B cell (primary cell): ENCODE measurements at regions of chr10 and their contacts with region 1.

Region 1: DNA sequence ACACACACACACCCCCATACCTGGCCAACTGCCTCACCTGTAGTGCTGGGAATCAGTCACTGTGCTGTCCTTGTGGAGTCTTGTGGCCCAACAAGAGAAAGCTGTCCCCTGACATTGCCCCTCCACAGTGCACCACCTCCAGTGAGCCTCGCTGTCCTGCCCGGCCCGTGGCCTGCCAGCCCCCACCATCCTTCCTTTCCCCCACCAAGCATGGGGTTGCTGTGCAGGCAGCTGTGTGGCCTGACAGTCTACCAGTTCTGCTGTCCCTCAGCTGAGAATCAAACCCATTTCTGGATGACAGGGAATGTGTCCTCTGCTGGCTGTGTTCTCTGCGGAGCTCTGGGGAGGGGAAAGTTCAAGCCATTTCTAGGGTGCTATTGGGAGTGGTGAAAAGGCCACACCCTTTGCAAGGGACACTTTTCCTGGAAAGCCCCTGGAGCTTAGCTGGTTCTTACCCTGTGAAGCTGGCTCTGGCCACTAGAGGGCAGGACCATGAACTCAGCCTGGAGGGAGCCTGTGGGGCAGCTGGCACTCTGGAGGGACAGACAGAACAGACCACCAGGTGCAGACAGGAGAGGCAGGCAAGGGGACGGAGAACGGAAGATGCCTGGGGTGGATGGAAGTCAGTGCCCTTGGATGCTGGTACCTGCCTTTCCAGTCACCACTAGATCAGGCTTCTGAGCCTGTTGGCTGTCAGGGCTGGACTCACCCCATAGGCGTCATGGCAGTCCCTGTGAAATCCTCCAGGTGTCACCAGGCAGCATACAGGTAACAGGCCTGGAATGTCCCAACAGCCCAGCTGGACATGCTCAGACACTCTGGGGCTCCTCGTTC is 10.5 kb upstream of the MTPAP start:
- DNase-seq: peak; percentile 75
- ATAC-seq: peak; percentile 88
- H3K4me3 ChIP-seq: no peak overlapping the region
- H3K4me3 Mint-ChIP-seq: no peak overlapping the region
- H3K27ac ChIP-seq: no peak overlapping the region
- H3K27ac Mint-ChIP-seq: no peak overlapping the region
- H3K4me1 ChIP-seq: peaks cover 3 to 6% of the 10 kb centered on the region in 2 donors
- H3K4me1 Mint-ChIP-seq: peaks cover 3% of the 10 kb centered on the region
- H3K27me3 ChIP-seq: no peaks in the 10 kb centered on the region
- H3K27me3 Mint-ChIP-seq: peaks cover 14% of the 10 kb centered on the region
- CTCF ChIP-seq: peak; percentile 81

Region 2: GRCh38 chr10:30348378-30348776 is 11.2 kb before region 1 on chr10:
- CTCF ChIA-PET with region 1: interaction called, 25 read pairs
- POLR2A ChIA-PET with region 1: no interaction called
- intact Hi-C with region 1: no loop called
- DNase-seq: no peak
- ATAC-seq: no peak
- H3K4me3 ChIP-seq: peak overlapping the region; percentile 60 to 98 (median 97)
- H3K4me3 Mint-ChIP-seq: peak overlapping the region; percentile 99
- H3K27ac ChIP-seq: peak overlapping the region; percentile 86 to 88
- H3K27ac Mint-ChIP-seq: peak overlapping the region; percentile 95
- H3K4me1 ChIP-seq: peaks cover 20 to 21% of the 10 kb centered on the region in 2 donors
- H3K4me1 Mint-ChIP-seq: peaks cover 49% of the 10 kb centered on the region
- H3K27me3 ChIP-seq: no peaks in the 10 kb centered on the region
- H3K27me3 Mint-ChIP-seq: no peaks in the 10 kb centered on the region
- CTCF ChIP-seq: no peak

Region 3: GRCh38 chr10:30378201-30379006 is 18.8 kb after region 1 on chr10:
- CTCF ChIA-PET with region 1: interaction called, 12 read pairs
- POLR2A ChIA-PET with region 1: no interaction called
- intact Hi-C with region 1: no loop called
- DNase-seq: no peak
- ATAC-seq: no peak
- H3K4me3 ChIP-seq: no peak overlapping the region
- H3K4me3 Mint-ChIP-seq: no peak overlapping the region
- H3K27ac ChIP-seq: no peak overlapping the region
- H3K27ac Mint-ChIP-seq: no peak overlapping the region
- H3K4me1 ChIP-seq: no peaks in the 10 kb centered on the region
- H3K4me1 Mint-ChIP-seq: no peaks in the 10 kb centered on the region
- H3K27me3 ChIP-seq: peaks cover 0 to 2% (median 0%) of the 10 kb centered on the region in 4 experiments
- H3K27me3 Mint-ChIP-seq: peaks cover 17% of the 10 kb centered on the region
- CTCF ChIP-seq: no peak

Region 4: GRCh38 chr10:30392564-30392990 is 33.0 kb after region 1 on chr10:
- CTCF ChIA-PET with region 1: interaction called, 10 read pairs
- POLR2A ChIA-PET with region 1: no interaction called
- intact Hi-C with region 1: no loop called
- DNase-seq: peak; percentile 82
- ATAC-seq: peak; percentile 100
- H3K4me3 ChIP-seq: no peak overlapping the region
- H3K4me3 Mint-ChIP-seq: no peak overlapping the region
- H3K27ac ChIP-seq: no peak overlapping the region
- H3K27ac Mint-ChIP-seq: no peak overlapping the region
- H3K4me1 ChIP-seq: peaks cover 4 to 5% of the 10 kb centered on the region in 2 donors
- H3K4me1 Mint-ChIP-seq: peaks cover 3% of the 10 kb centered on the region
- H3K27me3 ChIP-seq: no peaks in the 10 kb centered on the region
- H3K27me3 Mint-ChIP-seq: peaks cover 15% of the 10 kb centered on the region
- CTCF ChIP-seq: peak; percentile 97

Region 5: GRCh38 chr10:30583778-30584415 is 224.3 kb after region 1 on chr10:
- CTCF ChIA-PET with region 1: interaction called, 90 read pairs
- POLR2A ChIA-PET with region 1: no interaction called
- intact Hi-C with region 1: no loop called
- DNase-seq: peak; percentile 27
- ATAC-seq: no peak
- H3K4me3 ChIP-seq: peak overlapping the region in 4 of 5 experiments; percentile 24 to 51 (median 49)
- H3K4me3 Mint-ChIP-seq: peak overlapping the region; percentile 63
- H3K27ac ChIP-seq: no peak overlapping the region
- H3K27ac Mint-ChIP-seq: no peak overlapping the region
- H3K4me1 ChIP-seq: peaks cover 24 to 27% of the 10 kb centered on the region in 2 donors
- H3K4me1 Mint-ChIP-seq: peaks cover 27% of the 10 kb centered on the region
- H3K27me3 ChIP-seq: no peaks in the 10 kb centered on the region
- H3K27me3 Mint-ChIP-seq: no peaks in the 10 kb centered on the region
- CTCF ChIP-seq: no peak